ENCODE measurements at regions of chr1 and their contacts with region 1.

Region 1: GRCh38 chr1:1059494-1060280 is 14.4 kb downstream of the RNF223 start:
- DNase-seq: peak; percentile 96
- ATAC-seq: peak; percentile 55
- H3K4me3 Mint-ChIP-seq: peak overlapping the region; percentile 87
- H3K27ac Mint-ChIP-seq: no peak overlapping the region
- H3K4me1 Mint-ChIP-seq: peaks cover 31% of the 10 kb centered on the region
- H3K27me3 Mint-ChIP-seq: peaks cover 24% of the 10 kb centered on the region
- CTCF ChIP-seq: no peak

Region 2: GRCh38 chr1:899636-900317 is 159.9 kb before region 1 on chr1:
- CTCF ChIA-PET with region 1: no interaction called
- POLR2A ChIA-PET with region 1: no interaction called
- intact Hi-C with region 1: no loop called
- DNase-seq: no peak
- ATAC-seq: no peak
- H3K4me3 Mint-ChIP-seq: no peak overlapping the region
- H3K27ac Mint-ChIP-seq: no peak overlapping the region
- H3K4me1 Mint-ChIP-seq: peaks cover 11% of the 10 kb centered on the region
- H3K27me3 Mint-ChIP-seq: peaks cover 47% of the 10 kb centered on the region
- CTCF ChIP-seq: no peak

Region 3: GRCh38 chr1:983799-984473 is 75.8 kb before region 1 on chr1:
- CTCF ChIA-PET with region 1: interaction called, 25 read pairs
- POLR2A ChIA-PET with region 1: no interaction called
- intact Hi-C with region 1: no loop called
- DNase-seq: peak; percentile 73
- ATAC-seq: peak; percentile 93
- H3K4me3 Mint-ChIP-seq: no peak overlapping the region
- H3K27ac Mint-ChIP-seq: no peak overlapping the region
- H3K4me1 Mint-ChIP-seq: no peaks in the 10 kb centered on the region
- H3K27me3 Mint-ChIP-seq: peaks cover 27% of the 10 kb centered on the region
- CTCF ChIP-seq: peak; percentile 99

Region 4: GRCh38 chr1:1013105-1013921 is 46.4 kb before region 1 on chr1 and contains the start of gene ISG15:
- CTCF ChIA-PET with region 1: interaction called, 17 read pairs
- POLR2A ChIA-PET with region 1: interaction called, 13 read pairs
- intact Hi-C with region 1: no loop called
- DNase-seq: peak; percentile 96
- ATAC-seq: peak; percentile 88
- H3K4me3 Mint-ChIP-seq: peak within 1 kb of the TSS; percentile 93
- H3K27ac Mint-ChIP-seq: peak within 1 kb of the TSS; percentile 86
- H3K4me1 Mint-ChIP-seq: peaks cover 31% of the 10 kb centered on the region
- H3K27me3 Mint-ChIP-seq: no peaks in the 10 kb centered on the region
- CTCF ChIP-seq: no peak
- total RNA-seq, gene ISG15: 94.5 to 102 TPM

Region 5: GRCh38 chr1:1033009-1033587 is 26.6 kb before region 1 on chr1:
- CTCF ChIA-PET with region 1: interaction called, 38 read pairs
- POLR2A ChIA-PET with region 1: interaction called, 30 read pairs
- intact Hi-C with region 1: no loop called
- DNase-seq: peak; percentile 97
- ATAC-seq: peak; percentile 96
- H3K4me3 Mint-ChIP-seq: peak overlapping the region; percentile 42
- H3K27ac Mint-ChIP-seq: no peak overlapping the region
- H3K4me1 Mint-ChIP-seq: peaks cover 12% of the 10 kb centered on the region
- H3K27me3 Mint-ChIP-seq: peaks cover 23% of the 10 kb centered on the region
- CTCF ChIP-seq: peak; percentile 90

Region 6: GRCh38 chr1:1081311-1082238 is 21.9 kb after region 1 on chr1:
- CTCF ChIA-PET with region 1: no interaction called
- POLR2A ChIA-PET with region 1: interaction called, 15 read pairs
- intact Hi-C with region 1: no loop called
- DNase-seq: no peak
- ATAC-seq: no peak
- H3K4me3 Mint-ChIP-seq: no peak overlapping the region
- H3K27ac Mint-ChIP-seq: no peak overlapping the region
- H3K4me1 Mint-ChIP-seq: peaks cover 7% of the 10 kb centered on the region
- H3K27me3 Mint-ChIP-seq: no peaks in the 10 kb centered on the region
- CTCF ChIP-seq: no peak

Measured in activated CD8-positive, alpha-beta T cell treated with anti-CD3 and anti-CD28 coated beads for 36 hours (primary cell).